Spleen (tissue), 13 donors: ENCODE measurements at regions of chr20 and their contacts with region 1.

Region 1: GRCh38 chr20:19784511-19785172 is 26.6 kb downstream of the RIN2 start:
- DNase-seq: no peak
- H3K4me3 ChIP-seq: no peak overlapping the region
- H3K27ac ChIP-seq: peak overlapping the region in 6 of 8 donors; percentile 25 to 60 (median 42)
- H3K4me1 ChIP-seq: peaks cover 5 to 45% (median 25%) of the 10 kb centered on the region in 6 donors
- H3K27me3 ChIP-seq: no peaks in the 10 kb centered on the region
- CTCF ChIP-seq: peak; percentile 35 to 91 (median 73)
- POLR2A ChIP-seq: no peak

Region 2: DNA sequence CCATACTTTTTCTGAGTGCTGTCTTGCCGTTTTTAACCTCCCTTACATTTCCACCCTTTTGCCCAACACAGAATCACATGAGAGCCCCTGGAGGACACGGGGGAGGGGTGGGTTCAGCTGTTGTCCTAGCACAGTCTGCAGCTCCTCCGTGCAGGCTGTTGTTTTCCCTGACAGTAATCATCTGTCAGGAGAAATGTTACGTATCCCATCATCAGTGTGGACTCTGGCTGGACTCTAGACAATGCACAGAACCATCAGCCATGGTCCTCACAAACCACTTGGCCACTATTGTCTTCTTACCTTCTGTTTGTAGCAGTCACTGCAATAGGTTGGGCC is 65.5 kb after region 1 on chr20:
- intact Hi-C with region 1: no loop called
- DNase-seq: no peak
- H3K4me3 ChIP-seq: no peak overlapping the region
- H3K27ac ChIP-seq: peak overlapping the region in 6 of 8 donors; percentile 16 to 76 (median 70)
- H3K4me1 ChIP-seq: peaks cover 0 to 20% (median 15%) of the 10 kb centered on the region in 6 donors
- H3K27me3 ChIP-seq: no peaks in the 10 kb centered on the region
- CTCF ChIP-seq: no peak
- POLR2A ChIP-seq: no peak

Region 3: GRCh38 chr20:19889011-19889953 is 104.6 kb after region 1 on chr20:
- intact Hi-C with region 1: loop called (anchors 10 kb)
- DNase-seq: peak; percentile 80
- H3K4me3 ChIP-seq: peak overlapping the region; percentile 15 to 68 (median 31)
- H3K27ac ChIP-seq: peak overlapping the region; percentile 63 to 89 (median 84)
- H3K4me1 ChIP-seq: peaks cover 0 to 91% (median 38%) of the 10 kb centered on the region in 6 donors
- H3K27me3 ChIP-seq: peaks cover 0 to 9% (median 0%) of the 10 kb centered on the region in 7 donors
- CTCF ChIP-seq: no peak
- POLR2A ChIP-seq: no peak

Region 4: DNA sequence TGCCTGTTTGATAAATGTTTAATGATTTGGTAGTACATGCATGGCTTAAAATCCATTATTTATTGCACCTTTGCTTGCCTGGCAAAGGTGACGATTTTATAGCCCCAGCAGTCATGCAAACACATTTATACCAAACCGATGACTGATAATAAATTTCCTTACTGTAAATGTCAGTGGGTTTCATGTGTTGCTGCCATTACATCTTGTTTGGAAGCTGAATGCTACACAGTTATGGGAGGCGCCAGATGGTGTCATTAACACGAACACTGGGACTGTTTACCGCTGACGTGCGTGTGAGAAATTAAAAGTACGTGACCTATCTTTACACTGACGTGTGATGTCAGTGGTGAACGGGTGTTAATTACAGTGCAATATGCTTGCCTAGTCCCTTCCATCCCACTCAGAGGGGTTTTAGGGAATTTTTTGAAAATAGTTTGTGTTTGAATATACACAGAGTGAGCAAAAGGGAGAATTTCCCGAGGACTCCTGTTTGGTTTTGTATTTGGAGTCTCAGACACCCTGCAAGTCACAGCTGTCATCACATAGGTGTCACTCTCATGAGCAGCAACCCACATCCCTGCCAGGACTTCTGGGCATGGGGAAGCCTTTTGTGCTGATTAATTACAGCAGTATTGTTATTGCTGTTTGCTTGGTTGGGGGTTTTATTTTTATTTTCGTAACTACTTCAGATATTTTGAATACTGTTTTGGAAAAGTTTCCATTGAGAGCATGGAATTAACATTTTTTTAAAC is 431.5 kb after region 1 on chr20:
- intact Hi-C with region 1: no loop called
- DNase-seq: no peak
- H3K4me3 ChIP-seq: no peak overlapping the region
- H3K27ac ChIP-seq: no peak overlapping the region
- H3K4me1 ChIP-seq: no peaks in the 10 kb centered on the region
- H3K27me3 ChIP-seq: peaks cover 0 to 19% (median 0%) of the 10 kb centered on the region in 7 donors
- CTCF ChIP-seq: no peak
- POLR2A ChIP-seq: no peak